ENCODE measurements at regions of chr17 and their contacts with region 1.

Region 1: DNA sequence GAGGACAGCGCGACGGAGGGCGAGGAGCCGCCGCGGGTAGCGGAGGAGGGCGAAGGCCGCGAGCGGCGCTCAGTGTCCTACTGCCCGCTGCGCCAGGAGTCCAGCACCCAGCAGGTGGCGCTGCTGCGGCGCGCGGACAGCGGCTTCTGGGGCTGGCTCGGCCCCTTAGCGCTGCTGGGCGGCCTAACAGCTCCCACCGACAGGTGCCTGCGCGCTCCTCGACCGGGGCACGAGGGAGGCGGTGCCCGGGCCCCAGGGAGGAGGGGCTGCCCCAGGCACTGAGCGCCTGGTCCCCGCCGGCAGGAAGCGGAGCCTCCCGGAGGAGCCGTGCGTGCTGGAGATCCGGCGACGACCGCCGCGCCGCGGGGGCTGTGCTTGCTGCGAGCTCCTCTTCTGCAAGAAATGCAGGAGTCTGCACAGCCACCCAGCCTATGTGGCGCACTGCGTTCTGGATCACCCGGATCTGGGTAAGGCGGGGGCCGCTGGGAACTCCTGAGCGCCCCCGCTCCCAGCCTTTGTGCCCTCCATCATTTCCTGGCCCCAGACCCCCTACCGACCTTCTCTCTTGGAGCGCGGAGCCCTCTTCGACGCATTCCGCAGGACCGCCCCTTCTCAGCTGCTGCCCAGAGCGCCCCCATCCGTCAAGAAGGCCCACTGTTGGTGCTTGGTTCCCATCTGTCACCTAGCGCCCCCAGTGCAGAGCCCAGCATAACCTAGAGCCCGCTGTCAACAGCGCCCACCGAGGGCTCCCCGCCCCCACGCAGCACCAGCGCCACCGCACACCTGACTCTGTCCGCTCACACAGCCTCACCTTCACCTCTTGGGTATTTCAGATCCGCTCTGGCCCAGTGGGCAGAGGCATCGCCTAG is 3.7 kb downstream of the C17orf50 start:
- DNase-seq: peak; percentile 90
- ATAC-seq: peak; percentile 96
- H3K4me3 Mint-ChIP-seq: peak overlapping the region; percentile 88
- H3K27ac Mint-ChIP-seq: peak overlapping the region; percentile 76
- H3K4me1 Mint-ChIP-seq: peaks cover 10% of the 10 kb centered on the region
- H3K27me3 Mint-ChIP-seq: no peaks in the 10 kb centered on the region
- CTCF ChIP-seq: peak; percentile 89

Region 2: DNA sequence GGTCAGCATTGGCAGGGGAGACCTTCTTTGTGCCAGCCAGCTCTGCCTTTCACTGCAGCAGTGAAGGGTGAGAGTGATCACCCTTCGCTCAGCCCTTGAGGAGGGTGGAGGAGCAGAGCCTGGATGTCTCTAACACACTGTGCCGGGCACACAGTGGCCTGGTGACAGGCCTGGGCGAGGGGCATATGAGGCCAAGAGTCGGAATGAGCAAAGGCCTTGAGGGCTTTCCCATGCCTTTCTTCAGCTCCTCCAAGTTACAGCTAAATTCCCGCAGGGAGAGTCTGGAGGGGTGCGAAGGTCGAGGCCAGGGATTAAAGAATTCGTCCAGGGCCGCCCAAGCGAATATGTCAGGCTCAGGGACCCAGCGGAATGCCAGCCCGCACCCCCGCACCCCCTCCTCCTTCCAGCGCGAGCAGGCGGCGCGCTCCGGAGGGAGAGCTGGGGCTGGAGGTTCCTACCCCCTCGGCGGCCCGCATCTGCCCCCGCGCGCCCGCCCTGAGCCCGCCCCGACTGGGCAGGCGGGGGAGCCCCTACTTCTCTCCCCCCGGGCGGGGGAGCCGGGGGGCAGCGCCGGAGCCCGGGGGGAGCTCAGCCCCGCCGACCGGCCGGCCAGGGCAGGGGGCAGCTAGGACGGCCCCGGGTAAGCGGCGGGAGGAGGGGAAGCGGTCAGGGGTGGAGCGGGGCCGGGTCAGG is 33.0 kb before region 1 on chr17 and contains the start of gene RASL10B:
- CTCF ChIA-PET with region 1: interaction called, 28 read pairs
- POLR2A ChIA-PET with region 1: interaction called, 4 read pairs
- intact Hi-C with region 1: no loop called
- DNase-seq: peak; percentile 74
- ATAC-seq: peak; percentile 89
- H3K4me3 Mint-ChIP-seq: peak within 1 kb of the TSS; percentile 77
- H3K27ac Mint-ChIP-seq: peak within 1 kb of the TSS; percentile 29
- H3K4me1 Mint-ChIP-seq: peaks cover 14% of the 10 kb centered on the region
- H3K27me3 Mint-ChIP-seq: no peaks in the 10 kb centered on the region
- CTCF ChIP-seq: no peak
- total RNA-seq, gene RASL10B: 1.9 to 2.3 TPM

Region 3: GRCh38 chr17:35752945-35753764 is 11.2 kb before region 1 on chr17 and contains the start of gene GAS2L2:
- CTCF ChIA-PET with region 1: interaction called, 80 read pairs
- POLR2A ChIA-PET with region 1: no interaction called
- intact Hi-C with region 1: no loop called
- DNase-seq: no peak
- ATAC-seq: no peak
- H3K4me3 Mint-ChIP-seq: no peak within 1 kb of the TSS
- H3K27ac Mint-ChIP-seq: no peak within 1 kb of the TSS
- H3K4me1 Mint-ChIP-seq: peaks cover 24% of the 10 kb centered on the region
- H3K27me3 Mint-ChIP-seq: peaks cover 31% of the 10 kb centered on the region
- CTCF ChIP-seq: no peak
- total RNA-seq, gene GAS2L2: 0.27 to 0.34 TPM

Region 4: DNA sequence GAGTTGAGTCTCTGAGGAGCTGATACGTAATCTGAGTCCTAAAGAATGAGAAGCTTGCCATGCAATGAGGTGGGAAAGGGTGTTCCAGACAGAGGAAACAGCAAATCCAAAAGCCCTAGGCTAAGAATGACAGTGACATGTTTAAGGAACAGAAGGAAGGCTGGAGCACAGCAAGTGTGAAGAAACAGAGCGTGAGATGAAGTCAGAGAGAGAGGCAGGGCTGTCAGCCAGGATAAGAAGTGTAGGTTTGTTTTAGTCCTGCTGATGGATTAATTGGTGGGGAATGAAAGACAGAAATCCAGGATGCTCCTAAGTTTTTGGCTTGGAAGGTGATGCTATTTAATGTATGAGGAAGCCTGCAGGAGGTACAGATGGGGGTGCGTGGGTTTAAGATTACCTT is 16.6 kb after region 1 on chr17:
- CTCF ChIA-PET with region 1: interaction called, 34 read pairs
- POLR2A ChIA-PET with region 1: interaction called, 5 read pairs
- intact Hi-C with region 1: no loop called
- DNase-seq: no peak
- ATAC-seq: no peak
- H3K4me3 Mint-ChIP-seq: no peak overlapping the region
- H3K27ac Mint-ChIP-seq: no peak overlapping the region
- H3K4me1 Mint-ChIP-seq: no peaks in the 10 kb centered on the region
- H3K27me3 Mint-ChIP-seq: peaks cover 3% of the 10 kb centered on the region
- CTCF ChIP-seq: no peak

Region 5: DNA sequence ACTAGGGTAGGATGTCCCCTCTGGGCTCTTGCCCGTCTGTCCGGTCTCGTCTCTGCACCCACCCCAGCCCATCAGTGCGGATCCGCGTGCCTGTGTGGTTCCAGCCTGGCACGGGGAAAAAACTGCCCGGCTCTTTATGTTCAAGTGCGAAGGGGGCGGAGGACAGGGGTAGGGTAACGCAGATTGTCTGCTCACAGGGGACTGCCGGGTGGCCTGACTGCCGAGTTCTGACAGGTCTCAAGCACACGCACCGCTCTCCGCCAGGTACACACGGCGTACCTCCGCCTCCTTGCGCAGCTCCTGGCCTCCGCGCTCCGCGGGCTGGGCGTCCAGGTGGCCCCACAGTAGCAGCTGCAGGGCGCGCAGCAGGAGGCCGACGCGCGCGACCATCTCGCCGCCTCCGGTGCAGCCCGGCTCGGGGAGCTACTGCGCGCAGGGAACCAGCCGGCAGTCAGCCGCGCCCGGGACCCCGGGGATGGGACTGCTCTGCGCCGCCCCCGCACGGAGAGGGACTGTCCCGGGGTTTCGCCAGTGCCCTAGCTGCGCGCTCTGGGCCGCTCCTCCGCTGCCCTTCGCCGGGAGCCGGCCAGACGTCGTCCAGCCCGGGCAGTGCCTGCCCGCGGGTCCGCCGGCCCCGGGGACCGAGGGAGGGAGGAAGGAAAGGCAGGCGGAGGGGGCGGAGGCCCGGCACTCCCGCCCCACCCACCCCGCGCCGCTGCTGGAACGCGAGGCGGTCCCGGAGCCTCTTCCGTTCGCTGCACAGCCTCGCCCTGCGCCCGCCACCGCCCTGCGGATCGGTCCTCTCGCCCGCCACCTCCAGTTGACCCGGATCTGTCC is 30.8 kb after region 1 on chr17 and contains the start of gene MMP28:
- CTCF ChIA-PET with region 1: interaction called, 104 read pairs
- POLR2A ChIA-PET with region 1: interaction called, 3 read pairs
- intact Hi-C with region 1: no loop called
- DNase-seq: peak; percentile 64
- ATAC-seq: peak; percentile 79
- H3K4me3 Mint-ChIP-seq: peak within 1 kb of the TSS; percentile 68
- H3K27ac Mint-ChIP-seq: no peak within 1 kb of the TSS
- H3K4me1 Mint-ChIP-seq: peaks cover 17% of the 10 kb centered on the region
- H3K27me3 Mint-ChIP-seq: peaks cover 20% of the 10 kb centered on the region
- CTCF ChIP-seq: no peak
- total RNA-seq, gene MMP28: 0.41 TPM in 1 of 2 experiments, not detected in the other

Region 6: DNA sequence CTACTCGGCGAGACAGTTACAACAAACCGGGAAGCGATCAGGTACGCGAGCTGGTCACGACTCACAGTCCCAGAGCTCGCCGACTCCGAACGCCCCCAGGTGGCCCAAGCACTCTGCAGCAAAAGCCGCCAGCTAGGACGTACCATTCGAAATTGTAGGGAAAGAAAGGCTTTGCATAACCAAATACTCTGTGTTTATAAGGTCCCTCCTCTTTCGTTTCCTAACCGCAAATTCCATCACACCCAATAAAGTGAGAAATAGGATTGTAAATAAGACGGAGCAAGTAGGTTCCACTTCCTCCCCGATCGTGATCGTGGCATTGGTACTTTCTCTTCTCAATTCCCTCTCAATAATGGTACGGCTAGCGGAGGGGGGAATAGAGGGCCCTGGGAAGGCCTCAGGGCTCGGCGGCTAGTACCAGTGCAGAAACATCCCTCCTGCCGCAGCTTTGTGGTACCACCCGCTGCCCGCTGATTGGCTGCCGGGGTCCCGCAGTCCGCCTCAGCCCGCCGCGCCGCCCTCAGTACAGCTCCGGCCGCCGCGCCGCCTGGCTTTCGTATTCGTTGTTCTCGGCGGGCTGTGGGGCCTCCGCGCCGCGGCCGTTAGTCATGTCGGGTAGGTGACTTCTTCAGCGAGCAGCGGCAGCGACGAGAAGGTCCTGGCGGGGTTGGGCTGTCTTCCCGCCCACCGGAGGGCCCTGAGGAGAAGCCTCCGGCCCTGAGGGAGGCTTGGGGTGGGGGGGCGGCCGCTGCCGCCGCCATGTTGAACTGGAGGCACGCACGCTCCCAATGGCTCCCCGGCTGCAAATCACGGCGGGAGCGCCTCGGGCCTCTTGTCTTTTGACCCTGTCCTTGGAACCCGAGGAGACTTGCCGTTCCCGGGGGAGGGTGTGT is 44.9 kb after region 1 on chr17 and contains the start of gene TAF15:
- CTCF ChIA-PET with region 1: interaction called, 292 read pairs
- POLR2A ChIA-PET with region 1: interaction called, 38 read pairs
- intact Hi-C with region 1: loop called (anchors 1 kb)
- DNase-seq: peak; percentile 97
- ATAC-seq: peak; percentile 90
- H3K4me3 Mint-ChIP-seq: peak within 1 kb of the TSS; percentile 89
- H3K27ac Mint-ChIP-seq: peak within 1 kb of the TSS; percentile 100
- H3K4me1 Mint-ChIP-seq: peaks cover 61% of the 10 kb centered on the region
- H3K27me3 Mint-ChIP-seq: no peaks in the 10 kb centered on the region
- CTCF ChIP-seq: peak; percentile 74
- total RNA-seq, gene TAF15: 309 to 319 TPM

Region 7: GRCh38 chr17:35879773-35880654 is 115.7 kb after region 1 on chr17 and contains the start of gene CCL5:
- CTCF ChIA-PET with region 1: no interaction called
- POLR2A ChIA-PET with region 1: no interaction called
- intact Hi-C with region 1: no loop called
- DNase-seq: peak; percentile 77
- ATAC-seq: peak; percentile 87
- H3K4me3 Mint-ChIP-seq: peak within 1 kb of the TSS; percentile 82
- H3K27ac Mint-ChIP-seq: peak within 1 kb of the TSS; percentile 95
- H3K4me1 Mint-ChIP-seq: peaks cover 49% of the 10 kb centered on the region
- H3K27me3 Mint-ChIP-seq: no peaks in the 10 kb centered on the region
- CTCF ChIP-seq: no peak
- total RNA-seq, gene CCL5: 156 to 158 TPM

Region 8: GRCh38 chr17:35969558-35970380 is 205.4 kb after region 1 on chr17:
- CTCF ChIA-PET with region 1: no interaction called
- POLR2A ChIA-PET with region 1: no interaction called
- intact Hi-C with region 1: no loop called
- DNase-seq: peak; percentile 89
- ATAC-seq: peak; percentile 81
- H3K4me3 Mint-ChIP-seq: no peak overlapping the region
- H3K27ac Mint-ChIP-seq: no peak overlapping the region
- H3K4me1 Mint-ChIP-seq: no peaks in the 10 kb centered on the region
- H3K27me3 Mint-ChIP-seq: no peaks in the 10 kb centered on the region
- CTCF ChIP-seq: peak; percentile 85